GM10248 (cell line): ENCODE measurements at regions of chr1 and their contacts with region 1.

Region 1: DNA sequence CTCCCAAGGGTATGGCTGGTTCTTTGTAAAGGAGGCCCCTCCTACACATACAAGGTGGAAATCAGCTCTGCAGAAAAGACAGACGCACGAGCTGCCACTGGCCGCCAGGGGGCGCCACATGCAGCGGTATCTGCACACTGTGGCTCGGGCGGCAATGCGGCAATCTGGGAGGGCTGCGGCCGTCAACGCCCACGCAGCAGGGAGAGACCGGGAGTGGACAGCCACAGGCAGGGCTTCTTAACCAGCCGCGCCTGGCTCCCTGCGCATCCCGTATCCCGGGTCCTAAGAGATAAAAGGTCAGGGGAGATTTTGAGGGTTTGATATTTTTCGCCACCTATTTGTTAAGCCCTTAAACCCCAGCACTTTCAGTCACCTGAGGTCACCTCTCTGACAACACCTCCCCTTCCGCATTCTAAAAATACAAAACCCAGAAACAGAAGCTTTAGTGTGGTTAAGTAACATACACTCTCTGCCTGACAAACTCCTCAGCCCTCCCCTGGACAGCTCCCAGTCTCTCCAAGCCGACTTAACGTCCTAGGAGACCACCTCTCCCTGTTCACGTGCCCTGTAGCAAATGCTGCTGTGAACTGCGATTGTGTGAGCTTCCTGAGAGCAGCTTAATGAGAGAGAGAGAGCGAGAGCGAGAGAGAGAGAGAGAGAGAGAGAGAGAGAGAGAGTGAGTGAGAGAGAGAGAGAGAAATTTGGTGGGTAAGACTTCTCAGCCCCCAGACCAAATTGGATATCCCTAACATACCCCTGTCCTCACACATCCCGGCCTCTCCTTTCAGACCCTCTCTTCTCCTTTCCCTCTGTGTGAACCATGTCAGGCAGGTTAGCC is 13.5 kb upstream of the KCNA2 start:
- DNase-seq: peak; percentile 88
- CTCF ChIP-seq: peak; percentile 96

Region 2: DNA sequence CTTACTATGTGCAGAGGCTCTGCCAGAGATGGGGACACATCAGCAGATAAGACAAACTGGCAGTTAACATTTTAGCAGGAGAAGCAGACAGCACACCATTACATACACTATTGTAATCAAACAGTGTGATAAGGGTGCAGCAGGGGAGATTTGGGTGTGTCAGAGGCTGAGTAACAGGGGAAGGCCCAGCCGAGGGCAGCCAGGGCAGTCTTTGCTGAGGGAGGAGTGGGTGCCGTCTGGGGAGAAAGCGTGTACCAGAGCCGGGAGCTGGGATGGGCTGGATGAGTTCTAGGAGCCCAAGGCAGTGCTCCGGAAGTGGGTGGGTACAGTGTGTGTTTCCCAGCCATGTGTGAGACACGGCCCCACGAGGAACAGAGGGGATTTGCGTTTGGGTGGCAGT is 131.9 kb before region 1 on chr1:
- CTCF ChIA-PET with region 1: no interaction called
- POLR2A ChIA-PET with region 1: no interaction called
- DNase-seq: no peak
- CTCF ChIP-seq: no peak

Region 3: GRCh38 chr1:110524311-110525251 is 95.0 kb before region 1 on chr1:
- CTCF ChIA-PET with region 1: interaction called, 12 read pairs
- POLR2A ChIA-PET with region 1: no interaction called
- DNase-seq: peak; percentile 72
- CTCF ChIP-seq: peak; percentile 63

Region 4: GRCh38 chr1:110605901-110606656 is 13.6 kb before region 1 on chr1 and contains the start of gene KCNA2:
- CTCF ChIA-PET with region 1: interaction called, 36 read pairs
- POLR2A ChIA-PET with region 1: no interaction called
- DNase-seq: no peak
- CTCF ChIP-seq: no peak

Region 5: GRCh38 chr1:110639724-110640386 is 20.2 kb after region 1 on chr1:
- CTCF ChIA-PET with region 1: interaction called, 27 read pairs
- POLR2A ChIA-PET with region 1: no interaction called
- DNase-seq: no peak
- CTCF ChIP-seq: no peak

Region 6: GRCh38 chr1:110714374-110714995 is 94.9 kb after region 1 on chr1:
- CTCF ChIA-PET with region 1: interaction called, 10 read pairs
- POLR2A ChIA-PET with region 1: no interaction called
- DNase-seq: no peak
- CTCF ChIP-seq: no peak